CD14-positive monocyte (primary cell): ENCODE measurements at regions of chr15 and their contacts with region 1.

Region 1: GRCh38 chr15:97995881-97996603 is 35.5 kb downstream of the ARRDC4 start:
- DNase-seq: peak; percentile 18 to 39 (median 20)
- H3K4me3 ChIP-seq: peak overlapping the region in 2 of 3 experiments; percentile 33 to 35
- H3K4me3 Mint-ChIP-seq: peak overlapping the region; percentile 43 to 64
- H3K27ac ChIP-seq: peak overlapping the region in 1 of 2 donors; percentile 6
- H3K27ac Mint-ChIP-seq: peak overlapping the region in 3 of 7 donors; percentile 7 to 85 (median 8)
- H3K4me1 ChIP-seq: peaks cover 9 to 14% of the 10 kb centered on the region in 2 donors
- H3K4me1 Mint-ChIP-seq: peaks cover 17% of the 10 kb centered on the region
- H3K27me3 ChIP-seq: no peaks in the 10 kb centered on the region
- H3K27me3 Mint-ChIP-seq: peaks cover 0 to 2% (median 0%) of the 10 kb centered on the region in 3 donors
- CTCF ChIP-seq: no peak

Region 2: DNA sequence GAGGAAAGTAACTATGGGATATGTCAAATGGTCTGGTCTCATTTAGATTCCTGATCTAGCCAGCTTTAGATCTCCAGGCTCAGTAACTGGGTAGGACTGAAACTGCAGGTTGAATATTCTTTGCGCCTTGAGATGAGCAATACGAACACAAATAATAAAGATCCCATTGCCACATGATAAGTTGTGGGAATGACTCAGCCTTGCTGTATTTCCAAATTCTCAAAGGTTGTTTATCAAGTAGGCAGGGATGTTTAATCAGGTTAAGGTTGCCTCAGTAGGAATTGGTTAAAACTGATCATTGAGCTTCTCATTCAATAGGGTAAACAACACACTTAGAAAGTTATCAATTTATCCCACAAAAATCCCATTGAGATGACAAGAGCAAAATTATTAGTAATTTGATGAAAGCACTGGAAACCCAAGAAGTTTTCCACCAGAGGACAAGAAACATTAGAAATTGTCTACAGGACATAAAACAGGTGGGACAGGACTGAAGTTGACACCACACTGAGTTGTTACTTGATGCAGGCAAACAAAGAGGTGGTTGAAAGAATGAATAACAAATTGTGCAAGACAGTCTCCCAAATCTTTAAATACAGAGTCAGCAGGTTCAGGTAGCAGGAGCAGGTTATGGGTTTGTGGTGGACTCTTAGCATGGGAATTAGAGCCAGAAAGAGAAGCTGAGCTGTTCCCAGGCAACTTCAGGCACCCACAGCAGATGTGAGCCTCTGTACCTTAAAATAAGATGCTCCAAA is 66.0 kb before region 1 on chr15:
- intact Hi-C with region 1: loop called in 1 of 2 experiments (anchors 10 kb)
- DNase-seq: no peak
- H3K4me3 ChIP-seq: no peak overlapping the region
- H3K4me3 Mint-ChIP-seq: no peak overlapping the region
- H3K27ac ChIP-seq: no peak overlapping the region
- H3K27ac Mint-ChIP-seq: peak overlapping the region in 1 of 7 donors; percentile 35
- H3K4me1 ChIP-seq: no peaks in the 10 kb centered on the region
- H3K4me1 Mint-ChIP-seq: no peaks in the 10 kb centered on the region
- H3K27me3 ChIP-seq: no peaks in the 10 kb centered on the region
- H3K27me3 Mint-ChIP-seq: peaks cover 0 to 2% (median 2%) of the 10 kb centered on the region in 3 donors
- CTCF ChIP-seq: no peak

Region 3: GRCh38 chr15:98076021-98076816 is 80.2 kb after region 1 on chr15:
- intact Hi-C with region 1: loop called in 1 of 2 experiments (anchors 10 kb)
- DNase-seq: peak; percentile 32 to 57 (median 51)
- H3K4me3 ChIP-seq: peak overlapping the region in 1 of 3 experiments; percentile 34
- H3K4me3 Mint-ChIP-seq: peak overlapping the region; percentile 37 to 84
- H3K27ac ChIP-seq: peak overlapping the region in 1 of 2 donors; percentile 39
- H3K27ac Mint-ChIP-seq: peak overlapping the region; percentile 30 to 84 (median 74)
- H3K4me1 ChIP-seq: peaks cover 31 to 50% of the 10 kb centered on the region in 2 donors
- H3K4me1 Mint-ChIP-seq: peaks cover 52% of the 10 kb centered on the region
- H3K27me3 ChIP-seq: no peaks in the 10 kb centered on the region
- H3K27me3 Mint-ChIP-seq: no peaks in the 10 kb centered on the region
- CTCF ChIP-seq: no peak